Panc1 (cell line): ENCODE measurements at regions of chr20 and their contacts with region 1.

Region 1: GRCh38 chr20:45392733-45393132 is 14.6 kb upstream of the TP53TG5 start:
- DNase-seq: no peak
- ATAC-seq: 0 out of 2 replicates have a peak, but pooled peaks have one; percentile 51
- H3K4me3 ChIP-seq: no peak overlapping the region
- H3K27ac ChIP-seq: no peak overlapping the region
- H3K4me1 ChIP-seq: no peaks in the 10 kb centered on the region
- H3K27me3 ChIP-seq: no peaks in the 10 kb centered on the region
- CTCF ChIP-seq: peak; percentile 48

Region 2: GRCh38 chr20:45341939-45342859 is 50.5 kb before region 1 on chr20:
- CTCF ChIA-PET with region 1: interaction called, 12 read pairs
- POLR2A ChIA-PET with region 1: no interaction called
- in situ Hi-C with region 1: no loop called
- intact Hi-C with region 1: no loop called
- DNase-seq: no peak
- ATAC-seq: peak; percentile 47
- H3K4me3 ChIP-seq: peak overlapping the region; percentile 18 to 94
- H3K27ac ChIP-seq: peak overlapping the region; percentile 83
- H3K4me1 ChIP-seq: peaks cover 97% of the 10 kb centered on the region
- H3K27me3 ChIP-seq: no peaks in the 10 kb centered on the region
- CTCF ChIP-seq: no peak

Region 3: GRCh38 chr20:45552456-45552855 is 159.7 kb after region 1 on chr20:
- CTCF ChIA-PET with region 1: no interaction called
- POLR2A ChIA-PET with region 1: no interaction called
- in situ Hi-C with region 1: no loop called
- intact Hi-C with region 1: no loop called
- DNase-seq: no peak
- ATAC-seq: no peak
- H3K4me3 ChIP-seq: no peak overlapping the region
- H3K27ac ChIP-seq: no peak overlapping the region
- H3K4me1 ChIP-seq: no peaks in the 10 kb centered on the region
- H3K27me3 ChIP-seq: peaks cover 4% of the 10 kb centered on the region; the same call in 1 of the 2 replicates
- CTCF ChIP-seq: no peak

Region 4: DNA sequence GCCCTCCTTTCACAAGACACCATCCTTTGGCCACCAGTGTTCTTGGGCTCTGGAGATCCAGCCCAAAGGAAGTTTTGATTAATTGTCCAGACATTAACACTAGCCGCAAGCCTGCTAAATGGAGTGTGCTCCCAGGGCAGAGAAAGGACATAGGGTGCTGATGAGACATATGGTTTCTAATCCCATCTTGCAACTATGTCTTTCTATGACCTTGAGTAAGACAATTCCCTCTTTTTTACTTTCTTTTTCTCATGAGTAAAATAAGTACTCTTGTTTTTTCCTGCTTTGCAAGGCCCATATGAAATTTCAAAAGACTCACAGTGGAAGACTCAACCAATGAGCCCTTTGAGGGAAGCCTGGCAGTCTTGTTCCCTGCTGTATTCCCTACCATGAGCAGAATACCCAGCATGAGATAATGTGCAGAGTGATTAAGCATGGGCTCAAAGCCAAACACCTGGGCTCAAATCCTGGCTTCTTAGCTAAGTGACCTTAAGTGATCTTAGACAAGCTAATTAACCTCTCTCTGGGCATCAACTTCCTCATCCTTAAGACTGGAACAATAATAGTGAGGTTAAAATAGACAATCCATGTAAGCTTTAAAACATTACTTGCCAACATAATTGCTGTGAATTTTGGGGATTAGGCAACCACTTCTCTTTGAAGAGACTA is 312.4 kb after region 1 on chr20 and contains the start of gene WFDC10B:
- CTCF ChIA-PET with region 1: no interaction called
- POLR2A ChIA-PET with region 1: no interaction called
- in situ Hi-C with region 1: no loop called
- intact Hi-C with region 1: no loop called
- DNase-seq: no peak
- ATAC-seq: no peak
- H3K4me3 ChIP-seq: no peak within 1 kb of the TSS
- H3K27ac ChIP-seq: no peak within 1 kb of the TSS
- H3K4me1 ChIP-seq: no peaks in the 10 kb centered on the region
- H3K27me3 ChIP-seq: peaks cover 2% of the 10 kb centered on the region
- CTCF ChIP-seq: no peak
- total RNA-seq, gene WFDC10B: not detected

Region 5: GRCh38 chr20:45779011-45779915 is 386.5 kb after region 1 on chr20:
- CTCF ChIA-PET with region 1: no interaction called
- POLR2A ChIA-PET with region 1: interaction called, 12 read pairs
- in situ Hi-C with region 1: no loop called
- intact Hi-C with region 1: no loop called
- DNase-seq: peak; percentile 99
- ATAC-seq: peak; percentile 89
- H3K4me3 ChIP-seq: no peak overlapping the region
- H3K27ac ChIP-seq: peak overlapping the region; percentile 84
- H3K4me1 ChIP-seq: peaks cover 44% of the 10 kb centered on the region
- H3K27me3 ChIP-seq: no peaks in the 10 kb centered on the region
- CTCF ChIP-seq: no peak